ENCODE measurements at regions of chr20 and their contacts with region 1.

Region 1: DNA sequence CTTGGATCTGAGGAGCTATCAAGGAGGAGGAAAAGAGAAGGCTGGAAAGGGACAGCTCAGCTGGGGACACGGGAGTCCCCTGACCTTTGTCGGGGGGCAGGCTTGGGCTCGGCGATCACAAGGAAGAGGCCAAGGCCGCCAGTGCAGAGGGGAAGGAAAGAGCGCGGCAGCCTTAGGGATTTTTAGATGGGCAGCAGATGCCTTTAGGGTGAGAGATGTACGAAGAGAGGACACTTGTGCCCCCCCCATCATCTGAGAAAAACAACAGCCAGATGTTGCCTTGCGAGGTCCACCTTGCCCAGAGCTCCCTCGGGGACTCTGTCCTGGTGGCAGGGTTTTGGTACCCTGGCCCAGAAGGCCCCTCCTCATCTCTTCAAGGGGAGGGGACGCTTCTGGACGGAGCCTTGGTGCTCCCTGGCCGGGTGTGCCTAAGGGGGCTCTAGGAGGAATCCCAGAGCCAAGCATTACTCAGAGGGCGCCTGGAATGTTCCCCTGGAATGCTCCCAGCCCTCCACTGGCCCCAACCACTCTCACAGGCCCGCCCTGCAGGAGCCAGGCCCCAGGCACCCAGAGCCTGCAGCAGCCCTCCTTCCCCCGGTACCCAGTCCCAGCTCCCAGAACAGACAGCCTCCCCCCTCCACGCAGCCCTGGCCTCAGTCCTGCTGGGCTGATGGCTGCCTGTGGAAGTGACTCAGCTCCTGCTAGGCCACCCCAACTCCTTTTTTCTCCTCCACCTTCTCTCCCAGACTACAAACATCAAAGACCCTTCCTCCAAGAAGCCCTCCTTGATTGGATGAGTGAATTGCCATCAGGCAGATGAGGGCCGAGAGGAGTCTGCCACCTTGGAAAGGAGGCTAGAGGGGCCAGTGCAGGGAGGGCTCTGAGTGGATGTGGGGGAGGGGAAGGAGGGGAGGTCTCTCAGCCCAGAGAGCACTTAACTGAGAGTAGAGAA is 1.8 kb downstream of the ADAM33 start:
- DNase-seq: peak; percentile 41 to 93
- H3K4me3 ChIP-seq: no peak overlapping the region
- CTCF ChIP-seq: no peak
- POLR2A ChIP-seq: no peak

Region 2: DNA sequence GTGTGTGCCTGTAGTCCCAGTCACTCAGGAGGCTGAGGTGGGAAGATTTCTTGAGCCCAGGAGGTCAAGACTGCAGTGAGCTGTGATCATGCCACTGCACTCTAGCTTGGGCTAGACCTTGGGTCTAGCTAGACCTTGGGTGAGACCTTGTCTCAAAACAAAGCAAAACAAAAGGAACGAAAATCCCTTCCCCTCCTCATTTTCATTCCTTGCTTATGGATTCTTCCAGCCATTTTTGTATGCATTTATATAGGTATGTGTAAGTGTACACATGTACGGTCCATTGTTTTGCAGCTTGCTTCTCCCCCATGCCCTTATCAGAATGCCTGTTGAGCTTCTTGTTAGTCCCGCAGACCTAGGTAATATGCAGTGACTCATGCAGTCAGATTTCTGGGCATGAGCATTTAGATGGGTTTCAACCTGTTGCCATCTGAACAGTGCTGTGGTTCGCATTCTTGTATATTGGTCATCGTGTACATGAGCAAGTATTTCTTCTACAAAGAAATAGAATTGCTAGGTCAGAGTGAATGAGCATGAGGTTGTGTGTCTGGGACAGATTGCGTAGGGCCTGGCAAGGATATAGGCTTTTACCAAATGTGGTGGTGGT is 136.0 kb before region 1 on chr20:
- intact Hi-C with region 1: no loop called
- DNase-seq: no peak
- H3K4me3 ChIP-seq: no peak overlapping the region
- CTCF ChIP-seq: no peak
- POLR2A ChIP-seq: no peak

Region 3: GRCh38 chr20:3710703-3711483 is 30.9 kb after region 1 on chr20:
- intact Hi-C with region 1: loop called (anchors 2 kb)
- DNase-seq: peak; percentile 50 to 96
- H3K4me3 ChIP-seq: no peak overlapping the region
- CTCF ChIP-seq: peak in 1 of 3 donors; percentile 60
- POLR2A ChIP-seq: no peak

Region 4: DNA sequence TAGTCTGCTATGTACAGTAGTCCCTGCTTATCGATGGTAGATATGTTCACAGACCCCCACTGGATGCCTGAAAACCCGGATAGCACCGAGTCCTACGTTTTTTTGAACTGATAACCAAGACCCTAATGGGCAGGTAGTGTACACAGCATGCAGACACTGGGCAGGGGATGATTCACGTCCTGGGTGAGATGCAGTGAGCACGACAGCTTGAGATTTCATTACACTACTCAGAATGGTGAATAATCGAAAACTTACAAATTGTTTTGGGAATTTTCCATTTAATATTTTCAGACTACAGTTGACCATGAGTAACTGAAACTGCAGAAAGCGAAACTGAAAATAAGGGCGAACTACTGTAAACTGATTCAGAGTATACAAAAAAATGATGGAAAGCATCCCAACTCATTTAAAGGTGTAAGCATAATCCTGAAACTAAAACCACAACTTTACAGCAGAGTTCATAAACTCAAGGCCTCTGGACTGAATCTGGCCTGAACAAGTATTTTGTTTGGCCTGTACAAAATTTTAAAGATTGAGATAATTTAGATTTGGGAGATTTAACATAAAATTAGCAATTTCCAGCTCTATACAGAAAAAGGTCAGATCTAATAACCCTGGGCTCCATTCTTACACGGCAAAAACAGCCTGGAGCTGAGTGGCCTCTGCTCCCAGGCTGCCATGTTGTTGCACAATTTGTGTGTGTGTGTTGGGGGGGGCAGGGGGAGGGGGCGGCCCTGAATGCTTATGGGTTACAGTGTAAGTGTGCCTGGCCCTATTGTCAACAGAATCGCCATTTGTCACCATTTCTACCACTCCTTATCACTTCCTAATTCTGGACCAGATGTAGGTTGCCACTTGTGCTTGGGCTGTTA is 300.5 kb after region 1 on chr20:
- intact Hi-C with region 1: no loop called
- DNase-seq: no peak
- H3K4me3 ChIP-seq: no peak overlapping the region
- CTCF ChIP-seq: no peak
- POLR2A ChIP-seq: no peak

Region 5: GRCh38 chr20:4082406-4083097 is 402.5 kb after region 1 on chr20:
- intact Hi-C with region 1: loop called (anchors 10 kb)
- DNase-seq: peak; percentile 59 to 89
- H3K4me3 ChIP-seq: no peak overlapping the region
- CTCF ChIP-seq: no peak
- POLR2A ChIP-seq: no peak

Region 6: DNA sequence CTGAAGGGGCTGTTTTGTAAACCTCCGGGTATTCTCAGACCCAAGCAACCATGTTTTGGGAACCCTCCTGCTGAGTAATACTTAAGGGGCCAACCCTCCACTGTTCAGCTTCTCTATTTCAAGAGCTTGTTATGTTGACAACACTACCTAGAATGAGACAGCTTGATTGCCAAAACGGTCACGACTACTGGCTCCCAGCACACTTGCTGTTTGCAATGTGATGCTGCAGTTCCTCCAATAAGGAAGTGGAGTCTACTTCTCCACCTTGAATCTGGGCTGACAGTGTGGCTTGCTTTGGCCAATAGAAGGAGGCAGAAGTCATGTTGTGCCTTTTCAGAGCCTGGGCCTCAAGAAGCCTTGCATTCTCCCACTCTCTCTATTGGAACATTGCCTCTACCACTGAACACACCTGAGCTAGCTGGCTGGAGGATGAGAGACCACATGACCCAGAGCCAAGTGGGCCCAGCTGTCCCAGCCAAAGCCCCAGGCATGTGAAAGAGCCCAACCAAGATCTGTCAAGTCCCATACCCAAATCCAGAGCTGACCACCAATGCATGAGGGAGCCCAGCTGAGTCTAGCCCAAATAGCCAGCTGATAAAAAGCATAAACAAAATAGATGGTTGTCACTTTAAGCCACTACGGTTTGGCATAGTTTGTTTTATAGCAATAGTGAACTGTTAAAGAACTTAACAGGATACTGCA is 1149.6 kb after region 1 on chr20:
- intact Hi-C with region 1: no loop called
- DNase-seq: no peak
- H3K4me3 ChIP-seq: no peak overlapping the region
- CTCF ChIP-seq: no peak
- POLR2A ChIP-seq: no peak

Measured in lower leg skin (tissue), 4 donors.